Right ventricle myocardium inferior (tissue), 1 donor: ENCODE measurements at regions of chr16 and their contacts with region 1.

Region 1: GRCh38 chr16:27203429-27204231 is at the start of gene KDM8:
- DNase-seq: peak; percentile 100
- ATAC-seq: peak; percentile 98
- total RNA-seq, gene KDM8: 3.5 TPM

Region 2: DNA sequence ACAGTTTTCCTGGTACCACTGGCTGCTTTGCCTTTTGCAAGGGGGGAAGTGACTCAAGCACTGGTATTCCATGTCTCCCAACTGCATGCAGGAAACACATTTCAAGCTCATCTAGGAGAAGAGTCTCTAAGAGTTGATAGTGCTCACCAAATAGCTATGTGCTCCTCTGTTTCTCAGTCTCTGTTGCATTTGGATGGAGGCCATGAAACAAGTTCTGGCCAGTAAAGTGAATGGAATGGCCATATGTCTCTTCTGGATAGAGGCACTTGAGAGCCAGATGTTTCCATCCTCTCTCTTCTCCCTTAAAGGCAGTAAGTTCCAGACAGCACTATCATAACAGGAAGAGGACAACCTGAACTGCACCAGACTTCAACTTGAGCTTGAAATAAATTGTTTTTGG is 76.3 kb before region 1 on chr16:
- intact Hi-C with region 1: no loop called
- DNase-seq: no peak
- ATAC-seq: no peak

Region 3: DNA sequence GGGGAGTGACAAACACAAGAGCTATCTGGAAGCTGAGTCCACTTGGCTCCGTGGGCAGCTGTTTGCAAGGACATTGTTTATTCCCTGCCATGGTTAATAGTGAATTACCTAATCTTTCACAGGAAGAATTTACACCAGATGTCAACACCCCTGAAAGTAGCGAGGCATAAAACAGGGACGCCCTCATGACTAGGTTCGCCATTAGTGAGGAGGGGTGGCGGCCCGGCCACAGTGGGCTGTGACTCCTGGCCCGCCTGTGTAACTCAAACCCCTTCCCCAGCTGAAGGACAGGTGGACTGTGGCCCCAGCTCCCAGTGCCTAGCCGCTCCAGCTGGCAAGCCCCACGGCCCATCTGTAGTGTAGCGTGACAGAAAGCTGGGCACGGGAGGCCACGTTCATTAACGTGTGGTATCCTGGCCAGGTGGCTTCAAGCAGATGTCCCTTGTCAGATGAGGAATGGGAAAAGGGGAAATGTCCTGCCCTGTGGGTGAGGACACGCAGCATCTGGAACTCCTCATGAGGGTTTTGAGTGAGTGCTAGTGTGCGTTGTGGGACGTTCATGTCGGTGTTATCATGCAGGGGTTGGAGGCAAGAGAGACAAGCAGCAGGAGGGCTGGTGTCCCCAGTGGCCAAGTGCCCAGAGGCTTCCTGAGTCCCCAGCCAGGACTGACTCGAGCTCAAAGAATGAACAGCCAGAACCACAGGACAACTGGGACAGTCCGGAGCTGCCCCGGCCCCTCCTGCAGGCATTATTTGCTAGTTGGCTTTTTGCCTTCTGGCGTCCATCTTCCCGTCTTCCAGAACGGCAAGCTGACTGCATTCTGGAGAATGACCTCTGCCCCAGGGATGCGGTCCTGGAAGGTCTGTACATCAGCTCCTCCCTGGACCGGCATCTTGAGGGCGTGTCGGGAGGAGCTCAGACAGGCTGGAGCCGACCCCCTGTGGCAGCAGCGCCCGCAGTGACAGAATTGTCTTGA is 18.9 kb after region 1 on chr16:
- intact Hi-C with region 1: loop called (anchors 2 kb)
- DNase-seq: peak; percentile 84
- ATAC-seq: peak; percentile 85

Region 4: GRCh38 chr16:27268376-27269299 is 65.0 kb after region 1 on chr16 and contains the start of gene NSMCE1:
- intact Hi-C with region 1: loop called (anchors 5 kb)
- DNase-seq: peak; percentile 99
- ATAC-seq: peak; percentile 99
- total RNA-seq, gene NSMCE1: 35.8 TPM

Region 5: GRCh38 chr16:27449434-27450195 is 246.0 kb after region 1 on chr16:
- intact Hi-C with region 1: loop called (anchors 10 kb)
- DNase-seq: no peak
- ATAC-seq: no peak